ENCODE measurements at regions of chr1 and their contacts with region 1.

Region 1: GRCh38 chr1:229848752-229849677 is 218.0 kb upstream of the GALNT2 start:
- DNase-seq: peak; percentile 38
- ATAC-seq: peak; percentile 78
- H3K4me3 ChIP-seq: no peak overlapping the region
- H3K27ac ChIP-seq: no peak overlapping the region
- H3K4me1 ChIP-seq: no peaks in the 10 kb centered on the region
- H3K27me3 ChIP-seq: peaks cover 2 to 4% of the 10 kb centered on the region in 2 experiments; a peak in 4 of 5 replicates
- CTCF ChIP-seq: peak; percentile 51
- EP300 ChIP-seq: no peak
- POLR2A ChIP-seq: no peak
- RAD21 ChIP-seq: no peak

Region 2: DNA sequence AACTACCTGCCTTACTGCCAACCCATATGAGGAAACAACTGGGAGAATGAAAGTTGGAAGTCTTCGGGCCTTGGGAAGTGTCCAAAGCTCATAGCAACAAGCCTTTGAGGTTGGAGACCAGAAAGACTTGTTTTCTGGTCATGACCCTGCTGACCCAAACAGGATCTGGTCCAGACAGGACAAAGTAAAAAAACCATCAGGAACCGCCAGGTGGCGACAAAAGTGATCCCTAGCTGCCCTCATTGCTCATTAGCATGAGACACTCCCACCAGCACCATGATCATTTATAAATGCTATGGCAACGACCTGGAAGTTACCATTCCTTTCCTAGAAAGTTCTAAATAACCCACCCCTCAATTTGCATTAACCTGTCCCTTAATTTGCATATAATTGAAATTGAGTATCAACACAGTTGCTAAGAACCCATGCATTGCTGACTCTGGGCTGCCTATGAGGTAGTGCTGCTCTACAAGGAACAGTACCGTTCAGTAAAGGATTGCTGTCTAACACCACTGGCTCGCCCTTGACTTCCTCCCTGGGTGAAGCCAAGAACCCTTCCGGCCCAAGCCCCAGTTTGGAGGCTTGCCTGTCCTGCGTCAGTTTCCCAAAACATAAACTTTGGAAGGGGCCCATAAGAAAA is 133.9 kb before region 1 on chr1:
- CTCF ChIA-PET with region 1: no interaction called
- POLR2A ChIA-PET with region 1: no interaction called
- in situ Hi-C with region 1: no loop called
- intact Hi-C with region 1: loop called (anchors 10 kb)
- DNase-seq: peak; percentile 37
- ATAC-seq: peak; percentile 65
- H3K4me3 ChIP-seq: no peak overlapping the region
- H3K27ac ChIP-seq: no peak overlapping the region
- H3K4me1 ChIP-seq: peaks cover 16% of the 10 kb centered on the region
- H3K27me3 ChIP-seq: no peaks in the 10 kb centered on the region
- CTCF ChIP-seq: peak; percentile 56
- EP300 ChIP-seq: no peak
- POLR2A ChIP-seq: no peak
- RAD21 ChIP-seq: no peak

Region 3: GRCh38 chr1:229862017-229862774 is 13.2 kb after region 1 on chr1:
- CTCF ChIA-PET with region 1: no interaction called
- POLR2A ChIA-PET with region 1: no interaction called
- in situ Hi-C with region 1: no loop called
- intact Hi-C with region 1: no loop called
- DNase-seq: no peak
- ATAC-seq: no peak
- H3K4me3 ChIP-seq: no peak overlapping the region
- H3K27ac ChIP-seq: no peak overlapping the region
- H3K4me1 ChIP-seq: no peaks in the 10 kb centered on the region
- H3K27me3 ChIP-seq: peaks cover 0 to 43% of the 10 kb centered on the region in 2 experiments; a peak in 3 of 5 replicates
- CTCF ChIP-seq: no peak
- EP300 ChIP-seq: no peak
- POLR2A ChIP-seq: no peak
- RAD21 ChIP-seq: no peak

Measured in HepG2 (cell line).